Activated CD8-positive, alpha-beta T cell treated with anti-CD3 and anti-CD28 coated beads for 36 hours (primary cell): ENCODE measurements at regions of chr11 and their contacts with region 1.

Region 1: GRCh38 chr11:16613512-16614381 is 124.7 kb upstream of the C11orf58 start:
- DNase-seq: peak; percentile 84
- ATAC-seq: peak; percentile 97
- H3K4me3 Mint-ChIP-seq: peak overlapping the region; percentile 55
- H3K27ac Mint-ChIP-seq: no peak overlapping the region
- H3K4me1 Mint-ChIP-seq: peaks cover 16% of the 10 kb centered on the region
- H3K27me3 Mint-ChIP-seq: peaks cover 51% of the 10 kb centered on the region
- CTCF ChIP-seq: peak; percentile 76

Region 2: GRCh38 chr11:15941201-15941770 is 672.5 kb before region 1 on chr11:
- CTCF ChIA-PET with region 1: interaction called, 11 read pairs
- POLR2A ChIA-PET with region 1: no interaction called
- intact Hi-C with region 1: loop called (anchors 5 kb)
- DNase-seq: peak; percentile 11
- ATAC-seq: no peak
- H3K4me3 Mint-ChIP-seq: no peak overlapping the region
- H3K27ac Mint-ChIP-seq: no peak overlapping the region
- H3K4me1 Mint-ChIP-seq: no peaks in the 10 kb centered on the region
- H3K27me3 Mint-ChIP-seq: peaks cover 5% of the 10 kb centered on the region
- CTCF ChIP-seq: peak; percentile 84

Region 3: GRCh38 chr11:16252373-16252772 is 361.4 kb before region 1 on chr11:
- CTCF ChIA-PET with region 1: no interaction called
- POLR2A ChIA-PET with region 1: no interaction called
- intact Hi-C with region 1: no loop called
- DNase-seq: no peak
- ATAC-seq: no peak
- H3K4me3 Mint-ChIP-seq: no peak overlapping the region
- H3K27ac Mint-ChIP-seq: no peak overlapping the region
- H3K4me1 Mint-ChIP-seq: no peaks in the 10 kb centered on the region
- H3K27me3 Mint-ChIP-seq: no peaks in the 10 kb centered on the region
- CTCF ChIP-seq: no peak

Region 4: DNA sequence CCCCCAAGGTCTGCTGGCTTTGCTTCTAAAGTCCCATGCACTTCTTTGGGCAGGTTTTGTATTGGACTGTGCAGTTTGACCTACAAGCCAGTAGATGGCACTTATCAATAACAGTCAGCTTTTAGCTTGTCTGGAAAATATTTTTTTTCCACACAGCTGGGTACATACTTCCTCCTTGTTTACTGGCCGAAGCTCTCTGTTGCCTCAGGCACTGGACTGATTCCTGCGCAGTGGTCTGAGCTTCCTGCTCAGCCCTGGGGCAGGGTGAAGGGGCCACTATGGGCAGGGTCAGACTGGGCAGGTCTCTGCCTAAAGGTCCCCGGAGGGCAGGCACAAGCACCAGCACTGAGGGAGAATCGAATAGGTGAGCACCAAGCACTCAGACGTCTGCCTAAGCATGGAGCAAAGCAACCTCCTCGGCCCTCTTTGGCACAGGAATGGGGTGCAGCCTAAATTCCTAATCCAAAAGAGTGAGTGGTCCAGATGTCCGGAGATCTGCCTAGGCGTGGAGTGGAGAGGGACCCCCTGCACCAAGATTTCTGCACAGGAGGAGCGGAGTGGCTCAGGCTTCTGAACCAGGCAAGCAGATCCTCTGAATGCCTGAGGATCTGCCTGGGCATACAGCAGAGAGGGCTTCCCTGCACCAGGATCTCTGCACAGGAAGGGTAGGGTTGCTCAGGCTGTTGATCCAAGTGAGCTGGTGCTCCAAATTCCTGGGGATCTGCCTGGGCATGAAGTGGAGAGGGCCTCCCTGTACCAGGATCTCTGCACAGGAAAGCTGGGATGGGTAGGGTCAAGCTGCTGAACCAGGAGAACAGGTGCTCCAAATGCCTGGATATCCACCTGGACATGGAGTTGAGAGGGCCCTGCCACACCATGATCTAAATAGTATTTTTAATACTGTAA is 18.8 kb after region 1 on chr11:
- CTCF ChIA-PET with region 1: interaction called, 11 read pairs
- POLR2A ChIA-PET with region 1: no interaction called
- intact Hi-C with region 1: no loop called
- DNase-seq: no peak
- ATAC-seq: no peak
- H3K4me3 Mint-ChIP-seq: no peak overlapping the region
- H3K27ac Mint-ChIP-seq: no peak overlapping the region
- H3K4me1 Mint-ChIP-seq: no peaks in the 10 kb centered on the region
- H3K27me3 Mint-ChIP-seq: peaks cover 2% of the 10 kb centered on the region
- CTCF ChIP-seq: no peak